CD4-positive, alpha-beta T cell (primary cell): ENCODE measurements at regions of chr3 and their contacts with region 1.

Region 1: DNA sequence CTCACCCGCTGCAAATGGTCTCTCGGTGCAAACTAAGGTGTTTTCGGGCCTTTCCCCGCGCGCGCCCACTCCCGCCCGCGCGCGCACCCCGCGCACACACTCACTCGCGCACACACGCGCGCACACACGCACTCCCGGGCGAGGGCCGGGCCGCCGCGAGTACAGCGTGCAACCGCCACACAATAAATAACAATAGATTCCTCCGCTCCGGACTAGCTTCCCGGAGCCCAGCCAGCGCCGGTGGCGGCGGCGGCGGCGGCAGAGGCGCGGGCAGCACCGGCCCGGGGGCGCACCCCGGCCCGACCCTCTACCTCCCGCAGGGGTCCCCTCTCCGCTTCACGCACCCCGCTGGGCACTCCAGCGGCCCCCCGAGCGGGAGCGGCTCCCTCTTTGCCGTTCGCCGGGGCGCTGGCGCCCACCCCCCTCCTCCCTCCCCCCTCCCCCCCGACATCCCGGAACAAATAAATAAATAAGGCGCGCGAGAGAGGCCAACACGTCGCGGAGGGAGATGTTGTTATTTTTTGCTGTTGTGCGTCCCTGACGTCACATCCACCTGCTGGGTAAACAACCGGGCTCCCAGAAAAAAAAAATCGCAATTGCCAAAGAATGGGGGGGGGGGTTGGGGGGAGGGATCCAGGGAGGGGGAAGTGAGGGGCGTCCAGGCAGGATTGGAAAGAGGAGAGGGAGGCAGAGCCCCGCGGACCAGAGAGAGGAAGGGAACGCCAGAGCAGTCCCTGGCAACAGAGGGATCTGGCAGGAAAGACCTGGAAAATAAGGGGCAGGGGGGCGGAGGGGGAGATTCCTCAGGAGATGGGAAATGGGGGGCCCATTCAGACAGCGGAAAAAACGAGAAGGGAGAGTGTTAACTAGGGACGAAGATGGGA is at the start of gene FOXP1:
- DNase-seq: peak; percentile 49 to 92 (median 68)
- ATAC-seq: peak; percentile 54
- H3K4me3 ChIP-seq: peak within 1 kb of the TSS; percentile 81
- H3K4me3 Mint-ChIP-seq: peak within 1 kb of the TSS; percentile 95
- H3K27ac ChIP-seq: peak within 1 kb of the TSS; percentile 78 to 80
- H3K27ac Mint-ChIP-seq: peak within 1 kb of the TSS; percentile 85
- H3K4me1 ChIP-seq: peaks cover 25% of the 10 kb centered on the region
- H3K4me1 Mint-ChIP-seq: peaks cover 48% of the 10 kb centered on the region
- H3K27me3 ChIP-seq: no peaks in the 10 kb centered on the region
- H3K27me3 Mint-ChIP-seq: no peaks in the 10 kb centered on the region
- CTCF ChIP-seq: no peak
- total RNA-seq, gene FOXP1: 493 to 508 TPM

Region 2: GRCh38 chr3:70531063-70531657 is 1052.6 kb before region 1 on chr3:
- CTCF ChIA-PET with region 1: no interaction called
- POLR2A ChIA-PET with region 1: no interaction called
- intact Hi-C with region 1: loop called (anchors 5 kb)
- DNase-seq: peak in 2 of 14 experiments; percentile 12 to 20
- ATAC-seq: no peak
- H3K4me3 ChIP-seq: no peak overlapping the region
- H3K4me3 Mint-ChIP-seq: no peak overlapping the region
- H3K27ac ChIP-seq: no peak overlapping the region
- H3K27ac Mint-ChIP-seq: no peak overlapping the region
- H3K4me1 ChIP-seq: no peaks in the 10 kb centered on the region
- H3K4me1 Mint-ChIP-seq: no peaks in the 10 kb centered on the region
- H3K27me3 ChIP-seq: no peaks in the 10 kb centered on the region
- H3K27me3 Mint-ChIP-seq: peaks cover 22% of the 10 kb centered on the region
- CTCF ChIP-seq: peak; percentile 63

Region 3: GRCh38 chr3:71006810-71007785 is 576.7 kb before region 1 on chr3:
- CTCF ChIA-PET with region 1: interaction called, 4 read pairs
- POLR2A ChIA-PET with region 1: no interaction called
- intact Hi-C with region 1: loop called (anchors 5 kb)
- DNase-seq: peak in 3 of 14 experiments; percentile 61 to 66 (median 63)
- ATAC-seq: no peak
- H3K4me3 ChIP-seq: no peak overlapping the region
- H3K4me3 Mint-ChIP-seq: peak overlapping the region; percentile 22
- H3K27ac ChIP-seq: no peak overlapping the region
- H3K27ac Mint-ChIP-seq: peak overlapping the region; percentile 96
- H3K4me1 ChIP-seq: peaks cover 38% of the 10 kb centered on the region
- H3K4me1 Mint-ChIP-seq: peaks cover 83% of the 10 kb centered on the region
- H3K27me3 ChIP-seq: no peaks in the 10 kb centered on the region
- H3K27me3 Mint-ChIP-seq: no peaks in the 10 kb centered on the region
- CTCF ChIP-seq: peak; percentile 76

Region 4: GRCh38 chr3:71226565-71227269 is 357.1 kb before region 1 on chr3:
- CTCF ChIA-PET with region 1: no interaction called
- POLR2A ChIA-PET with region 1: interaction called, 5 read pairs
- intact Hi-C with region 1: loop called in 1 of 2 experiments (anchors 5 kb)
- DNase-seq: peak; percentile 52 to 87 (median 72)
- ATAC-seq: peak; percentile 71
- H3K4me3 ChIP-seq: peak overlapping the region; percentile 55
- H3K4me3 Mint-ChIP-seq: peak overlapping the region; percentile 69
- H3K27ac ChIP-seq: peak overlapping the region; percentile 59 to 68
- H3K27ac Mint-ChIP-seq: peak overlapping the region; percentile 87
- H3K4me1 ChIP-seq: peaks cover 24% of the 10 kb centered on the region
- H3K4me1 Mint-ChIP-seq: peaks cover 85% of the 10 kb centered on the region
- H3K27me3 ChIP-seq: no peaks in the 10 kb centered on the region
- H3K27me3 Mint-ChIP-seq: no peaks in the 10 kb centered on the region
- CTCF ChIP-seq: no peak

Region 5: DNA sequence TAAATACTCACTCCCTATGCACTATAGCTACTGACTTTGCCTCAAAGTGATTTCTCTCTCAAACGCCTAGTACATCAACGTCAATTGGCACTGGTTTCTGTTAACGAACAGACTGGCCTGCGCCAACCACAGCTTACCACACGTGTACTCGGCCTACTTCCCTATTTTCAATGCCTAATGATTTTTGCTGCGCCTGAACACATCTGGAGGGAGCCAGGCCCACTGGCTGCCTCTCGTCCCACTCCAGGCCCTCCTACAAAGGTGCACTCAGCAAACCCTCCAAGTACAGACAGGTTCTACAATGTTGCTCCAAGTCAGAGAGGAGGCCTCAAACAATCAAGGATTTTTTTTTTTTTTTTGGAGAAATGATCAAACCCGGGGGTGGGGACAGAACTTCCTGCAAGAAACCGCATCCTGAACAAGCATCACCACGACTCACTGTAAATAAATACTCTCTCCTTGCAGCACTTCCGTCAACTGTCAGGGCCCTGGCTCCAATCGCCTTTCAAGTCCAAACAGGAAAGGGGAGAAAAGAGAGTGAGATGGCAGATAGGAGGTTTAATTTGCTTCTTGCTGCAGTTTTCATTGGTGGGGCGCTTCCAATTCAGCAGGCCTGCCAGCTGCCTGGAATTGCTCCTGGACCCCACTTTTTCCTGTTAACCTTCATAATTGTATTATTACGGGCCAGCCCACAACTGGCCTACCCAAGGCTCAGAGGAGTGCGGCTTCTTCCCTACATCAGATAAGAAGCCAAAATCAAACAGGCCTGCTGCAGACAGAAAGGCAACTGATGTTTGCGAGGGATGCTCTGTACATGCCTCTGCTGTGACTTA is 139.6 kb before region 1 on chr3:
- CTCF ChIA-PET with region 1: interaction called, 3 read pairs
- POLR2A ChIA-PET with region 1: interaction called, 4 read pairs
- intact Hi-C with region 1: loop called in 1 of 2 experiments (anchors 5 kb)
- DNase-seq: peak; percentile 53 to 95 (median 68)
- ATAC-seq: peak; percentile 78
- H3K4me3 ChIP-seq: no peak overlapping the region
- H3K4me3 Mint-ChIP-seq: peak overlapping the region; percentile 79
- H3K27ac ChIP-seq: peak overlapping the region; percentile 67 to 82
- H3K27ac Mint-ChIP-seq: peak overlapping the region; percentile 94
- H3K4me1 ChIP-seq: peaks cover 97% of the 10 kb centered on the region
- H3K4me1 Mint-ChIP-seq: peaks cover 97% of the 10 kb centered on the region
- H3K27me3 ChIP-seq: no peaks in the 10 kb centered on the region
- H3K27me3 Mint-ChIP-seq: no peaks in the 10 kb centered on the region
- CTCF ChIP-seq: no peak

Region 6: GRCh38 chr3:71641674-71642073 is 57.9 kb after region 1 on chr3:
- CTCF ChIA-PET with region 1: no interaction called
- POLR2A ChIA-PET with region 1: no interaction called
- intact Hi-C with region 1: no loop called
- DNase-seq: peak in 1 of 14 experiments; percentile 19
- ATAC-seq: no peak
- H3K4me3 ChIP-seq: no peak overlapping the region
- H3K4me3 Mint-ChIP-seq: no peak overlapping the region
- H3K27ac ChIP-seq: no peak overlapping the region
- H3K27ac Mint-ChIP-seq: no peak overlapping the region
- H3K4me1 ChIP-seq: no peaks in the 10 kb centered on the region
- H3K4me1 Mint-ChIP-seq: no peaks in the 10 kb centered on the region
- H3K27me3 ChIP-seq: no peaks in the 10 kb centered on the region
- H3K27me3 Mint-ChIP-seq: no peaks in the 10 kb centered on the region
- CTCF ChIP-seq: no peak

Region 7: DNA sequence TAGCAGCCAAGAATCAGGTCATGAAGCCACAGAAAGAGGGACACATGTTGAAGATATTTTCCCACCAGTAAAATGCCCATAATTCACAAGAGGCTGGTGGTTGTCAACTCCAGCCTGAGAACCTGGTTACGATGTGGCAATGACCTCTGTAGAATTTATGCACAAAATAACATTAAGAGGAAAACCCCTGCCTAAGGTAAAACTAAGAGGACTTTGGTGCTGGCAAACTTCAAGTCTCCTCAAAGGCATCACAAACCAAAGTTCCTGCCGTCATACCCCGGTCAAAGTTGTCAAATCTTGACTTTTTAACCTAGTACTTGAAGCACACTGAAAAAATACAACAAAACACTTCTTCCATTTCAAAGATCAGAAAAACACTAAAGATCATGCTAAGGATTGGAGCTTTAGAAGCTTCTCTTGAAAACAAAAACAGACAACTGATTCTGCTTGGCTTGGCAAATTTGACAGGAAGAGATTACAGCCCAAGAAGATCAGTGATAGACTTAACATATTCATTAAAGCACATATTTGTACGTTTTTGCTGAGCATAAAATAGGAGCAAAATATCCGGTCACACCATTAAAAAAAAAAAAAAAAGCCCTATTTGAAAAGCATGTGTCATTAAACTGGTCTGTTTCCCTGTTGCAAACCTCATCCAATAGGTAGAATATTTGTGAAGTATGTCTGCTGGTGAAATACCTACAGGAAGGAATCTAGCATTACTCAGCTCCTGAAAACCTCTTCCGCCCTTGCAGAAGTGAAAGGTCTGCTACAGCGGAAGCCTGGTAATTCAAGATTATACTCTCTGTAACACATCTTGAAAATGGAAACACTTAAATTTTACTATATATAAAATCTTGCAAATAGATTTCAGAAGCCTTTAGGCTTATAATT is 118.6 kb after region 1 on chr3:
- CTCF ChIA-PET with region 1: no interaction called
- POLR2A ChIA-PET with region 1: no interaction called
- intact Hi-C with region 1: loop called in 1 of 2 experiments (anchors 10 kb)
- DNase-seq: peak in 5 of 14 experiments; percentile 28 to 79 (median 67)
- ATAC-seq: peak; percentile 89
- H3K4me3 ChIP-seq: no peak overlapping the region
- H3K4me3 Mint-ChIP-seq: peak overlapping the region; percentile 72
- H3K27ac ChIP-seq: peak overlapping the region; percentile 49 to 51
- H3K27ac Mint-ChIP-seq: peak overlapping the region; percentile 85
- H3K4me1 ChIP-seq: peaks cover 42% of the 10 kb centered on the region
- H3K4me1 Mint-ChIP-seq: peaks cover 78% of the 10 kb centered on the region
- H3K27me3 ChIP-seq: no peaks in the 10 kb centered on the region
- H3K27me3 Mint-ChIP-seq: no peaks in the 10 kb centered on the region
- CTCF ChIP-seq: no peak

Region 8: DNA sequence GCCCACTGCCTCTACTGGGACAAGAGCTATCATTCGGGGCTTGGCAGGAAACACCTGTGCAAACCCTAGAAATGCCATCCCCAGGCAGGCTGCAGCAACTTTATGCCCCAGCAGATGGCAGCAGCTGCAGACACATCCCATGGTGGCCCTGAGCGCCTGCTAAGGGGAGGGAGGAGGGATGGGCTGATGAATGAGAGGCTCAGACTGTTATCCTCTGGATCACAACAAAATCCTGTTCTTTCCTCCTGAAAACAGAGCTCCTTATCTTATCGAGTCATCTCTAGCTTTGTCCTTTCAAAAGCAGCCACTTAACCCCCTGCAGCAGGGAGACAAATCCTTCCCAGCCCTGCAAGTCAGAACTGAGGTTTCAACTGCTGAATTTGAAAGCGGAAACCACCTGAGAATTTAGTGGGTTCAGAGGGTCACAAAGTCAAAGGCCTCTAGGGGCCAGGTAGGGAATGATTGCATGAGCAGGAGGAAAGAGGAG is 291.7 kb after region 1 on chr3:
- CTCF ChIA-PET with region 1: no interaction called
- POLR2A ChIA-PET with region 1: no interaction called
- intact Hi-C with region 1: no loop called
- DNase-seq: peak; percentile 63 to 84 (median 74)
- ATAC-seq: peak; percentile 99
- H3K4me3 ChIP-seq: no peak overlapping the region
- H3K4me3 Mint-ChIP-seq: no peak overlapping the region
- H3K27ac ChIP-seq: no peak overlapping the region
- H3K27ac Mint-ChIP-seq: no peak overlapping the region
- H3K4me1 ChIP-seq: peaks cover 12% of the 10 kb centered on the region
- H3K4me1 Mint-ChIP-seq: peaks cover 21% of the 10 kb centered on the region
- H3K27me3 ChIP-seq: no peaks in the 10 kb centered on the region
- H3K27me3 Mint-ChIP-seq: no peaks in the 10 kb centered on the region
- CTCF ChIP-seq: peak; percentile 78